Kidney (tissue), 22 donors: ENCODE measurements at regions of chr22 and their contacts with region 1.

Region 1: GRCh38 chr22:39183991-39184585 is 31.6 kb upstream of the CBX7 start:
- DNase-seq: peak in 2 of 5 donors; percentile 27 to 83
- H3K4me3 ChIP-seq: no peak overlapping the region
- H3K27ac ChIP-seq: no peak overlapping the region
- H3K4me1 ChIP-seq: peaks cover 0 to 15% (median 6%) of the 10 kb centered on the region in 3 donors
- H3K27me3 ChIP-seq: no peaks in the 10 kb centered on the region
- CTCF ChIP-seq: no peak

Region 2: DNA sequence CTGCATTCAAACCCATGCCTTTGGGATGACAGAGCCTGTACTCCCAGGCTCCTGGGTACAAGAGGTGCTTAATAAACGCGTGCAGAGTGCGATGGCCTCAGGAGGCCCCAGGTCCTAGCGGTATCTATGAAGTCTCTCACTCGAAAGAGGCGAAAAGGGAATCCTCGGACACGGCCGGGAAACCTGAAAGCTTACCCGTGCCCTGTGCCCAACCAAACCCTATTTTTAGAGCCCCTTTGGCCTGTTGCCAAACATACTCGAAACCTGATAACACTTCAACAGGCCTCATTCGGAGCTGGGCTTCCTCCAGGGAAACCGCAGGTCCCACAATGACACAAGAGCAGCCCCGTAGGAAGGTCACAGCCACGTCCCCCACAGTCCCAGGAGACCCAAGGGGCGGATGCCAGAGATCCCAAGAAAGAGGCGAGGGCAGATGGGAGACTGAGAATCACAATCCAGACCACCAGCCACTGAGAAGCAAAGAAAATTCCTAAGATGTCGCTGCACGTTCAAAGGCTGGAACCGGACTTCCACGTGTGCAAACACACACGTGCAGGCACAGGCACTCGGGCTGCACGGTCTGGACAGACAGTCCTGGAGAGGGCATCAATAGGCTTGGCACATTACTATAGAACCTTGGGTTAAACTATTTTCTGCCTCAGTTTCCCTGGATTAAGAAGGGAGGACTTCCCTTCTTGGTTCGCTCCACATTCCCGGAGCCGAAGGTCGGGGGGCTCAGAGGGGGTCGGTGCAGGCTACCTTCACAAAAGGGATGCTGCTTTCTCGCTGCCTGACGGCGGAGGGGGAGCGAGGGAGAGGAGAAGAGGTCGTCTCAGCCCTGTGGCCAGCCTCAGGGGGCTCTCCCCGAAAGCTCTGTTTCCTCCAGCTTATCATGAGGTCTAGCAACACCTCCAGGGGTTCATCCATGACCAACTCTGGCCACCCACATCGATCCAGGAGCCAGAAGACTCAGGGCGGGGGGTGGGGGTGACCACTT is 52.5 kb after region 1 on chr22:
- intact Hi-C with region 1: loop called (anchors 10 kb)
- DNase-seq: peak; percentile 59 to 79 (median 69)
- H3K4me3 ChIP-seq: no peak overlapping the region
- H3K27ac ChIP-seq: peak overlapping the region in 1 of 2 donors; percentile 51
- H3K4me1 ChIP-seq: peaks cover 0 to 49% (median 35%) of the 10 kb centered on the region in 3 donors
- H3K27me3 ChIP-seq: no peaks in the 10 kb centered on the region
- CTCF ChIP-seq: no peak

Region 3: GRCh38 chr22:39264349-39265038 is 80.4 kb after region 1 on chr22:
- intact Hi-C with region 1: no loop called
- DNase-seq: no peak
- H3K4me3 ChIP-seq: no peak overlapping the region
- H3K27ac ChIP-seq: no peak overlapping the region
- H3K4me1 ChIP-seq: peaks cover 0 to 3% (median 0%) of the 10 kb centered on the region in 3 donors
- H3K27me3 ChIP-seq: no peaks in the 10 kb centered on the region
- CTCF ChIP-seq: no peak

Region 4: DNA sequence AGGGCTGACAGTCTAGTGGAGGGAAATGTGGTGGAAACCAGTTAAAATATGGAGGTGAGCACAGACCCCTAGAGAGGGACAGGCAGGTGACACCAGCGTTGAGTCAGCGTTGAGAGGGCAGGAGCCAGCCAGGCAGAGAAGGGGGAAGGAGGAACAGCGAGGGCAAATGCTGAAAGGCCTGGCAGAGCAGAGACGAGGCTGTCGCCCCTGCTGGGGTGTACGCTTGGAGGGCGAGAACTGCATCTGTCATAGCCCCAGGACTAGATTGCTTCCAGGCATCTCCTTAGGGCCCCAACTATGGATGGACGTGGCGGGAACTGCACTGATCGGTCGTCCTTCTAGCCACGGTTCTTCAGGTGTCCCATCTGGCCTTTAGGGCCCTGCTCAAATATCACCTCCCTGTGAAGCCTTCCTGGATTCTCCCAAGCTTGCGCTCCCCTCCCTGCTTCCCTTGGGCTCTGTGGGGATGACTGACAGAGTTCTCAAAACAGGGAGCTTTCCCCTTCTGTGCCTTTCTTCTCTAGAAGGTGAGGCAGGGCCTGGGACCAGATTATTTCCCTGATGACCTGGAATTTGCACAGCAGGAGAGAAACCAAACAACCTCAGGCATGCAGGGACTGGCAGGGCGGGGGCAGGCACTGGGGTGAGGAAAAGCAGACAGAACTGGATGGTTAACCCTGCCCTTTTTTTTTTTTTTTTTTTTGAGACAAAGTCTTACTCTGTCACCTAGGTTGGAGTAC is 176.8 kb after region 1 on chr22:
- intact Hi-C with region 1: no loop called
- DNase-seq: peak in 1 of 5 donors; percentile 35
- H3K4me3 ChIP-seq: no peak overlapping the region
- H3K27ac ChIP-seq: no peak overlapping the region
- H3K4me1 ChIP-seq: no peaks in the 10 kb centered on the region
- H3K27me3 ChIP-seq: no peaks in the 10 kb centered on the region
- CTCF ChIP-seq: no peak